ENCODE measurements at regions of chr5 and their contacts with region 1.

Region 1: DNA sequence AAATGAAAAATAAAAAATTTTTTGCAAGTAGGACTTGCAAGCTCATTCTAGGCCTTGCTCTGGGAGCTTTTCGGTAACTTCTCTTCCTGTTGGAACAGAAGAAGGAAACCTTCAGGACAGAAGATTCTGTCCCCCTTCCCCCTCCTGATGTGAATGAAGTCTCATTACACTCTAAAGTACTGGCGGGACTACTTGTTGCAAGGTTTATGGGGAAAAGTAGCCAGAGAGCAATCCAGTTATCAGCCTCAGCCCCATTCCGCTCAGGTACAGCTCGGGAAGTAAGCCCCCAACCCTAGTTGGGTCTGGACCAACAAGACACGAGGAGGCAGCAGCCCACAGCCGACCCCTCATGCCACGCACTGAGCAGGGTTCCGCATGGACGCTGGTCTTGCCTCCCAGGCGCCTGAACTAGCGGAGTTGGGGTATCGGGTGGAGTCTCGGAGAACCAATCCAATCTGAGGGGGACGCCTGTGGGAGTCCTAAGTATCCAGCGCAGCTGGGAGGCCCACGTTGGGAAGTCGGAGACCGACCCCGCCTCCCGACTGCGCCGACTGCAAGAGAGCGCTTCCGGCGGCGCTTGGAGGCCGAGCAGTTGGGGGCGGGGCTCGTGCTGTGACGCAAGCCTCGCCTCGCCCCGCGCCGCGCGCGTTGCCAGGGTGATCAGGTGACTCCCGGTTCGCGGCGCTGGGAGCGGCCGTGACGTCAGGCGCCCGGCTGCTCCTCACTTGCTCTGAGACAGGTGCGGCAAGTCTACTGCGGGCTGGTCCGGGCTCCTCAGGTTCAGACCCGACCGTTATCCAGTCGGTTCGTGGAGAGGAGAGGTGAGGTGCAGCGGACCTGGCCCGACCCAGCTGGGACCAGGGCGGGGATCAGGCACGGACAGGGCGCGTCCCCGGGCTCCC is at the start of gene CYSTM1:
- DNase-seq: peak; percentile 93
- H3K4me3 Mint-ChIP-seq: peak within 1 kb of the TSS; percentile 93
- H3K27ac Mint-ChIP-seq: peak within 1 kb of the TSS; percentile 83
- H3K4me1 Mint-ChIP-seq: peaks cover 10% of the 10 kb centered on the region
- H3K27me3 Mint-ChIP-seq: peaks cover 27% of the 10 kb centered on the region
- total RNA-seq, gene CYSTM1: 9.2 and 11.3 TPM in 2 replicates

Region 2: GRCh38 chr5:140113699-140114263 is 60.9 kb before region 1 on chr5 and contains the start of gene PURA:
- intact Hi-C with region 1: loop called (anchors 2 kb)
- DNase-seq: peak; percentile 94
- H3K4me3 Mint-ChIP-seq: peak within 1 kb of the TSS; percentile 92
- H3K27ac Mint-ChIP-seq: peak within 1 kb of the TSS; percentile 85
- H3K4me1 Mint-ChIP-seq: peaks cover 50% of the 10 kb centered on the region
- H3K27me3 Mint-ChIP-seq: peaks cover 25% of the 10 kb centered on the region
- total RNA-seq, gene PURA: 10.8 and 11.0 TPM in 2 replicates

Region 3: DNA sequence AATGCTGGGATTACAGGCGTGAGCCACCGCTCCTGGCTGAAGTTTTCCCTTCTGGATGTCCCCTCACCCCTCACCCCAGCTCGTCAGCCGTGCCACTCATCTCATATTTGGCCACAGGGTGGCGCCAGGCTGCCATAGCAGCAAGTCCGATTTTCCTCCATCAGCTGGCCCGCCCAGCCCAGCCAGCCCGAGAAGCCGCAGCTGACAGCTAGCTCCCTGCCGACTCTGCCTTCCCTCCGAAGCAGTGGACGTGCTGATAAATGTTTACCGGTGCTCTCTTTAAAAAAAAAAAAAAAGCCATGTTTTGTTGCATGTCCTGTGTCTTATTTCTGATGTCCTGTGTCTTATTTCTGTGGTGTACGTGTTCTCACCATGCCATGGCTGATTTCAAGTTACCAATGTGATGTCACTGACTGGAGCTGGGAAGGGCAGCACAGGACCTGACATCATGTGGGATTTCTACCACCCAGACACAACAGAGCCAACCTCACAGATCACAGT is 69.9 kb after region 1 on chr5:
- intact Hi-C with region 1: no loop called
- DNase-seq: peak; percentile 66
- H3K4me3 Mint-ChIP-seq: no peak overlapping the region
- H3K27ac Mint-ChIP-seq: no peak overlapping the region
- H3K4me1 Mint-ChIP-seq: peaks cover 18% of the 10 kb centered on the region
- H3K27me3 Mint-ChIP-seq: no peaks in the 10 kb centered on the region

Region 4: DNA sequence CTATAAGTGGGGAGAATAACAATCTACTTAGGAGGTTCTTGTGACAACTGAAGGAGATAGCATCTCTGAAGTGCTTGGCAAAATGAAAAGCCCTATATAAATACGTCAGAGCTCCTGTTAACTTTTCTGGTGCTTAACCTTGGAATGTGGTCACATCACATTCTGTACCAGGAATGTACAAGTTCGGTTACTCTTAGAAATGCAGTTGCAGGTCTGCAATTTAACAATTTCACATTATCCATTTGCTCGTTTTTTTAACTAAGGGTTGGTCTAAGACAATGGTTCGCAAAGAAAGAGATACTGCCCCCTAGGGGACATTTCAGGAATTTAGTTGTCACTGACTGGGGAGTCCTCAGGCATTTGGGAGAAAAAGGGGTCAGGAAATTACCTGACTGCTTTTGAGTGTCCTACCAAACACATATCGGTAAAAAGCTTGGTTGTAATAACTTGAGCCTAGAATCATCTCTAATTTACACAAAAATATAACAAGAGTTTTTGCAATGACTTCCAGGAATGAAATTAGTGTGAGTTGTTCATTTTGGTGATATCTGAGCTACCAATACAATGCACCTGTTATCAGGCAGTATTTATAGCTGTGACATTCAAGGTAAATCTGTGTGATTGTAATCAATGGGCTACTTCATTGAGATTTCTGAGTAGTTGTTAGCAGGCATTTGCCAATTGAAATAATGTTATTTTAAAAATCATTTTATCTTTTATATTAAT is 177.1 kb after region 1 on chr5:
- intact Hi-C with region 1: loop called (anchors 5 kb)
- DNase-seq: peak; percentile 45
- H3K4me3 Mint-ChIP-seq: no peak overlapping the region
- H3K27ac Mint-ChIP-seq: no peak overlapping the region
- H3K4me1 Mint-ChIP-seq: peaks cover 10% of the 10 kb centered on the region
- H3K27me3 Mint-ChIP-seq: peaks cover 15% of the 10 kb centered on the region

Measured in activated T-helper 2 cell treated with anti-CD3 and anti-CD28 coated beads, Interferon-gamma antibody, Interleukin-2, Interleukin-4, amounts not matched to agents 10 μg/mL and 5 μg/mL and 100 μg/mL, durations not matched to agents 14 hours and 24 hours and 36 hours (primary cell).